ENCODE measurements at regions of chr3 and their contacts with region 1.

Region 1: DNA sequence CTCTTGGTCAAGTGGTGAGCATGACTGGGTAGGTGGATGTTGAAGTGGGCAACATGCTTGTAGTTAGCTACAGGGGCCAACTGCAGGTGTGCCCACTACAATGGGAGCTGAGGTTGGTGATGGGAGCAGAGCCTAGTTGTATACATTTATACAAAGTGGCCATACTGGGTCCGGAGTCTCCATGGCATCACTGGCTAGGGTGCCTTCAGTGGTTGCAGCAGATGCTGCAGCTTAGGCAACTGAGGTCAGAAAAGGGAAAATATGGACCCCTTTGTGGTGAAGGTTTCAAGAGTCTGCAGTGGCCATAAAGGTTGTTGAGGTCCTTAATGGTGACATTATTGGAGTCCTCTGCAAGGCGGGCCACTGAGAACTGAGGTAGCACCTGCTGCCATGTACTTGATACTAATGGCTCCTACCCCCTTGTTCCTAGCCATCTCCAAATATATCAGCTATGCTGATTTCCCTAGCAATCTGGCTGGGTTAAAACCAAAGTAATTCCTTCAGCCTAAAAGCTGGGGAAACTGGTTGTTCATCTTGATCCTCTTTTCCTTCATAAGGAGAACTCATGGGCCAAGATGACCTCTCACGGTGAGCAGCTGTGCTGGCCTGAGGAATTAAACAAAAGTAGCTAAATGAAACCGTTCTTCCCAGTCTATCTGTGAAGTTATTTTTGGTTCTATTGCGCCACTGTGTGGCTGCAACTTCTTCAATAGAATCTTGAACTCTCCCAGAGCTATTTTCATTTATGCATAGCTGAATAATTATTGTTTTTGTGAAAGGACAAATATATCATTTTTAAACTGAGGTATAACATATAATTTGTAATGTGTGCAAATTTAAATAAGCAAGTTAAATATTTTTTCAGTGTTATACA is 76.0 kb upstream of the PLSCR4 start:
- DNase-seq: no peak
- ATAC-seq: peak in 1 of 2 donors; percentile 54
- H3K4me3 ChIP-seq: no peak overlapping the region
- H3K27ac ChIP-seq: no peak overlapping the region
- H3K4me1 ChIP-seq: no peaks in the 10 kb centered on the region
- H3K27me3 ChIP-seq: no peaks in the 10 kb centered on the region
- CTCF ChIP-seq: peak in 4 of 5 experiments; percentile 25 to 51 (median 35)
- POLR2A ChIP-seq: no peak

Region 2: GRCh38 chr3:146189519-146190173 is 137.3 kb before region 1 on chr3:
- in situ Hi-C with region 1: no loop called
- intact Hi-C with region 1: loop called (anchors 2 kb)
- DNase-seq: no peak
- ATAC-seq: peak in 1 of 2 donors; percentile 69
- H3K4me3 ChIP-seq: no peak overlapping the region
- H3K27ac ChIP-seq: no peak overlapping the region
- H3K4me1 ChIP-seq: no peaks in the 10 kb centered on the region
- H3K27me3 ChIP-seq: no peaks in the 10 kb centered on the region
- CTCF ChIP-seq: peak; percentile 39 to 75 (median 55)
- POLR2A ChIP-seq: no peak

Region 3: GRCh38 chr3:146218880-146219866 is 107.7 kb before region 1 on chr3:
- in situ Hi-C with region 1: loop called (anchors 5 to 10 kb)
- intact Hi-C with region 1: loop called (anchors 2 kb)
- DNase-seq: no peak
- ATAC-seq: no peak
- H3K4me3 ChIP-seq: no peak overlapping the region
- H3K27ac ChIP-seq: no peak overlapping the region
- H3K4me1 ChIP-seq: peaks cover 0 to 3% of the 10 kb centered on the region in 2 donors
- H3K27me3 ChIP-seq: no peaks in the 10 kb centered on the region
- CTCF ChIP-seq: peak; percentile 40 to 67 (median 47)
- POLR2A ChIP-seq: no peak

Region 4: GRCh38 chr3:146404436-146404835 is 77.5 kb after region 1 on chr3:
- in situ Hi-C with region 1: no loop called
- intact Hi-C with region 1: no loop called
- DNase-seq: no peak
- ATAC-seq: no peak
- H3K4me3 ChIP-seq: no peak overlapping the region
- H3K27ac ChIP-seq: no peak overlapping the region
- H3K4me1 ChIP-seq: no peaks in the 10 kb centered on the region
- H3K27me3 ChIP-seq: no peaks in the 10 kb centered on the region
- CTCF ChIP-seq: no peak
- POLR2A ChIP-seq: no peak

Region 5: GRCh38 chr3:146550743-146551510 is 224.0 kb after region 1 on chr3:
- in situ Hi-C with region 1: loop called in 1 of 4 experiments (anchors 25 kb)
- intact Hi-C with region 1: no loop called
- DNase-seq: no peak
- ATAC-seq: no peak
- H3K4me3 ChIP-seq: no peak overlapping the region
- H3K27ac ChIP-seq: no peak overlapping the region
- H3K4me1 ChIP-seq: no peaks in the 10 kb centered on the region
- H3K27me3 ChIP-seq: no peaks in the 10 kb centered on the region
- CTCF ChIP-seq: no peak
- POLR2A ChIP-seq: no peak

Region 6: GRCh38 chr3:146577662-146578061 is 250.8 kb after region 1 on chr3:
- in situ Hi-C with region 1: loop called (anchors 10 to 25 kb)
- intact Hi-C with region 1: loop called (anchors 5 kb)
- DNase-seq: no peak
- ATAC-seq: no peak
- H3K4me3 ChIP-seq: no peak overlapping the region
- H3K27ac ChIP-seq: no peak overlapping the region
- H3K4me1 ChIP-seq: no peaks in the 10 kb centered on the region
- H3K27me3 ChIP-seq: no peaks in the 10 kb centered on the region
- CTCF ChIP-seq: peak in 2 of 5 experiments; percentile 12 to 24
- POLR2A ChIP-seq: no peak

Measured in gastrocnemius medialis (tissue), 4 donors.